SK-N-SH (cell line): ENCODE measurements at regions of chr1 and their contacts with region 1.

Region 1: GRCh38 chr1:110495926-110496600 is 22.9 kb downstream of the KCNA10 start:
- DNase-seq: peak; percentile 86
- H3K4me3 ChIP-seq: no peak overlapping the region; a peak in 1 of 4 replicates
- H3K27ac ChIP-seq: no peak overlapping the region
- H3K4me1 ChIP-seq: no peaks in the 10 kb centered on the region
- H3K27me3 ChIP-seq: no peaks in the 10 kb centered on the region; the same call in 1 of the 2 replicates
- CTCF ChIP-seq: peak; percentile 97
- EP300 ChIP-seq: no peak
- RAD21 ChIP-seq: peak; percentile 97

Region 2: GRCh38 chr1:110053557-110054428 is 442.3 kb before region 1 on chr1:
- CTCF ChIA-PET with region 1: interaction called, 10 read pairs
- POLR2A ChIA-PET with region 1: no interaction called
- DNase-seq: peak; percentile 71
- H3K4me3 ChIP-seq: no peak overlapping the region; a peak in 1 of 4 replicates
- H3K27ac ChIP-seq: peak overlapping the region in 1 of 2 experiments; percentile 93; a peak in 2 of 4 replicates
- H3K4me1 ChIP-seq: peaks cover 60 to 79% of the 10 kb centered on the region in 2 experiments
- H3K27me3 ChIP-seq: no peaks in the 10 kb centered on the region
- CTCF ChIP-seq: peak; percentile 96
- EP300 ChIP-seq: no peak
- RAD21 ChIP-seq: peak; percentile 98

Region 3: GRCh38 chr1:110312188-110313121 is 183.6 kb before region 1 on chr1:
- CTCF ChIA-PET with region 1: interaction called, 25 read pairs
- POLR2A ChIA-PET with region 1: no interaction called
- DNase-seq: peak; percentile 77
- H3K4me3 ChIP-seq: peak overlapping the region in 1 of 2 experiments; percentile 49; a peak in 1 of 4 replicates
- H3K27ac ChIP-seq: no peak overlapping the region
- H3K4me1 ChIP-seq: peaks cover 0 to 4% of the 10 kb centered on the region in 2 experiments; a peak in 1 of 4 replicates
- H3K27me3 ChIP-seq: no peaks in the 10 kb centered on the region; the same call in 1 of the 2 replicates
- CTCF ChIP-seq: peak; percentile 94
- EP300 ChIP-seq: no peak
- RAD21 ChIP-seq: peak; percentile 100

Region 4: DNA sequence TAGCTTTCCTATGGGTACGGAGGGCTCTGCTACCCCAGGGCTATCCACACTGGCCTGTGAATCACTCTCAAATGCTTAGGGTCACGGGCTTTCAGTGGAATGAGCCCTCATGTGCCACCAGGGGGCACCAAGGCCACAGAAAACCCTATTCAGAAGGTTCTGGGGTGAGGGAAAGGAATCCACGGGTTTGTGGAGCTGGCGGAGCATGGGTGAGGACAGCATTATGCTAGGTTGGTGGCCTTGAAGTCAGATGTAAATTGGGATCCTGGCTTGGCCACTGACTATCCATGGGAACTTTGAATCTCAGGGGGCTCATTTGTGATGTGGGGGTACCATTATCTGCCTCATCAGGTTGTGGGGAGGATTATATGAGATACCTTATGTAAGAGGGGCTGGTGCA is 83.5 kb before region 1 on chr1:
- CTCF ChIA-PET with region 1: interaction called, 135 read pairs
- POLR2A ChIA-PET with region 1: interaction called, 3 read pairs
- DNase-seq: peak; percentile 78
- H3K4me3 ChIP-seq: no peak overlapping the region; a peak in 1 of 4 replicates
- H3K27ac ChIP-seq: no peak overlapping the region
- H3K4me1 ChIP-seq: peaks cover 3 to 7% of the 10 kb centered on the region in 2 experiments; a peak in 1 of 4 replicates
- H3K27me3 ChIP-seq: no peaks in the 10 kb centered on the region
- CTCF ChIP-seq: peak; percentile 79
- EP300 ChIP-seq: no peak
- RAD21 ChIP-seq: peak; percentile 82

Region 5: DNA sequence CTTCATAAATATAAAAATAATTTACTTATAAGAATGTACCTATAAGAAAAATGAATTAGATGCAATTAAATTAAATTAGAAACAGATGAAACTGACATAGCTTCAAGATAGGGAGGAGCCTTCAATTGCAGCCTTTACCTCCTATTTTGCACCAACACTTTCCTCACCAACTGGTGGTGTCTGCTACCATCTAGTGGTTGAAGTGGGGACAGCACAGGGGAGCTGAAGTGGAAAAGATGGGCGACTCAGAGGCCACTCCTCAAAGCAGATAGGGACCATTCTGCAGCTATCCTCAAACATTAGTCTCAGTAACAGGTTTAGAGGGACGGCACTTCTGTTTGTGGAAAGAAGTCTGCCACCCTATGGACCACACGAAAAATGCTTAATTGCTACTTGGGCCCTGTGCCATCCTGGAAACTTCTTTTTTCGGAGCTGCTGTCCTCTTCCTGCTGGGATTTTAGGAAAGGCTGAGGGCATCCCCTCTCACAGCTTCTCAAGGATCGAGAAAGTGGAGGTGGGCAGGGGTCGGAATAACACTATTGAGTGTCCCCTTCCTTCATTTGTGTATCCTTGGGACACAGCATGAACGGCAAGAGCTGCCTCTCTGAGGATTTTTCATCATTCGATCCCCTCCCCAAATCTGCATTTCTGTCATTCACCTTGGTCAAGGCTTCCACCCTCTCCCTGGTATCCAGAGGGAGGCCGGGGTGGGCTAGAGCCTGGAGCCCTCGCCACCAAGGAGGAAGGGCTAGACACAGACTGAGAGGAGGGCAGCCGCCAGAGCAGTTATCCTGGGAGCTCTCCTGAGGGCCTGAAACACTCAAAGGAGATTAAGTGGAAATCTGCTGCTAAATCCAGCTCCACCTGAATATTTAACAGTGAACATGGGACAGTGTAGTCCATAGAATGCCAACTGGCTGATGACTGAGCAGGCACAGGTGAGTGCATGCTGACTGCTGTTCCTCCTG is 35.5 kb before region 1 on chr1:
- CTCF ChIA-PET with region 1: interaction called, 85 read pairs
- POLR2A ChIA-PET with region 1: no interaction called
- DNase-seq: peak; percentile 83
- H3K4me3 ChIP-seq: peak overlapping the region in 1 of 2 experiments; percentile 26; a peak in 1 of 4 replicates
- H3K27ac ChIP-seq: no peak overlapping the region
- H3K4me1 ChIP-seq: 0 out of 4 replicates have a peak, but pooled peaks cover 0 to 6% of the 10 kb centered on the region in 2 experiments
- H3K27me3 ChIP-seq: no peaks in the 10 kb centered on the region
- CTCF ChIP-seq: peak; percentile 94
- EP300 ChIP-seq: no peak
- RAD21 ChIP-seq: peak; percentile 99

Region 6: GRCh38 chr1:110524311-110525251 is 28.5 kb after region 1 on chr1:
- CTCF ChIA-PET with region 1: interaction called, 86 read pairs
- POLR2A ChIA-PET with region 1: no interaction called
- DNase-seq: peak; percentile 80
- H3K4me3 ChIP-seq: no peak overlapping the region; a peak in 1 of 4 replicates
- H3K27ac ChIP-seq: no peak overlapping the region
- H3K4me1 ChIP-seq: no peaks in the 10 kb centered on the region; a peak in 1 of 4 replicates
- H3K27me3 ChIP-seq: no peaks in the 10 kb centered on the region; the same call in 1 of the 2 replicates
- CTCF ChIP-seq: peak; percentile 65
- EP300 ChIP-seq: no peak
- RAD21 ChIP-seq: peak; percentile 90